WTC11 (cell line): ENCODE measurements at regions of chr20 and their contacts with region 1.

Region 1: DNA sequence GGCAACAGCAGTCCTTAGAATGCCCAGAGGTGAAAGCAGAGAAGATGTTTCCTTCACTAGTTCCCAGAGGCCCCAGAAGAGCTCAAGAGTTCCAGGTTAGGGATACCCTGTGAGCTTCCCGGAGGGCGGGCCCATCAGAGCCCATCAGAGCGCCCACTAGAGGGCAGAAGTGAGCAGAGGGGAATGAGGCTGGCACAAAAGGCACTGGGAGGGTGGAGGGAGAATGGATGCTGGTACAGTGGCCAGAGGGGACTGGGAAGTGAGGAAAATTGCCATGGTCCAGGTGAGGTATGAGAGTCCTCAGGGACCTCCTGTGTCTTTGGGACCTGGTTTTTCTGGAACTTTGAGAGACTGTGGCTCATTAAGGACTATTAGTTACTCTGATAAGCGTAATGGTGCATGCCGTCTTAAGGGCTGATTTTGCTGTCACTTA is 57.3 kb downstream of the LINC00237 start:
- DNase-seq: peak; percentile 88
- ATAC-seq: peak; percentile 88
- H3K4me3 Mint-ChIP-seq: no peak overlapping the region
- H3K27ac Mint-ChIP-seq: no peak overlapping the region
- H3K4me1 Mint-ChIP-seq: peaks cover 18% of the 10 kb centered on the region
- H3K27me3 Mint-ChIP-seq: no peaks in the 10 kb centered on the region
- CTCF ChIP-seq: peak; percentile 85

Region 2: GRCh38 chr20:20837574-20838021 is 211.3 kb before region 1 on chr20:
- CTCF ChIA-PET with region 1: interaction called, 14 read pairs
- POLR2A ChIA-PET with region 1: no interaction called
- DNase-seq: peak; percentile 68
- ATAC-seq: peak; percentile 78
- H3K4me3 Mint-ChIP-seq: peak overlapping the region; percentile 46
- H3K27ac Mint-ChIP-seq: no peak overlapping the region
- H3K4me1 Mint-ChIP-seq: peaks cover 6% of the 10 kb centered on the region; the same call in 1 of the 2 replicates
- H3K27me3 Mint-ChIP-seq: peaks cover 3% of the 10 kb centered on the region
- CTCF ChIP-seq: peak; percentile 67

Region 3: GRCh38 chr20:20860078-20860806 is 188.6 kb before region 1 on chr20:
- CTCF ChIA-PET with region 1: interaction called, 29 read pairs
- POLR2A ChIA-PET with region 1: no interaction called
- DNase-seq: peak; percentile 99
- ATAC-seq: peak; percentile 81
- H3K4me3 Mint-ChIP-seq: no peak overlapping the region
- H3K27ac Mint-ChIP-seq: no peak overlapping the region
- H3K4me1 Mint-ChIP-seq: no peaks in the 10 kb centered on the region; the same call in 1 of the 2 replicates
- H3K27me3 Mint-ChIP-seq: peaks cover 4% of the 10 kb centered on the region
- CTCF ChIP-seq: peak; percentile 80

Region 4: GRCh38 chr20:21033817-21034216 is 15.0 kb before region 1 on chr20:
- CTCF ChIA-PET with region 1: interaction called, 16 read pairs
- POLR2A ChIA-PET with region 1: no interaction called
- DNase-seq: no peak
- ATAC-seq: peak; percentile 92
- H3K4me3 Mint-ChIP-seq: no peak overlapping the region
- H3K27ac Mint-ChIP-seq: no peak overlapping the region
- H3K4me1 Mint-ChIP-seq: peaks cover 15% of the 10 kb centered on the region
- H3K27me3 Mint-ChIP-seq: no peaks in the 10 kb centered on the region; the same call in none of the 2 replicates
- CTCF ChIP-seq: no peak

Region 5: GRCh38 chr20:21125849-21126580 is 77.2 kb after region 1 on chr20 and contains the start of gene KIZ:
- CTCF ChIA-PET with region 1: interaction called, 22 read pairs
- POLR2A ChIA-PET with region 1: no interaction called
- DNase-seq: peak; percentile 98
- ATAC-seq: peak; percentile 94
- H3K4me3 Mint-ChIP-seq: peak within 1 kb of the TSS; percentile 95
- H3K27ac Mint-ChIP-seq: peak within 1 kb of the TSS; percentile 99
- H3K4me1 Mint-ChIP-seq: peaks cover 45% of the 10 kb centered on the region
- H3K27me3 Mint-ChIP-seq: peaks cover 2% of the 10 kb centered on the region
- CTCF ChIP-seq: no peak
- total RNA-seq, gene KIZ: 39.6 to 43.6 TPM (median 41.8 TPM) in 3 replicates